SK-N-SH (cell line): ENCODE measurements at regions of chr6 and their contacts with region 1.

Region 1: GRCh38 chr6:106444777-106445507 is 84.4 kb downstream of the CRYBG1 start:
- DNase-seq: peak; percentile 67
- H3K4me3 ChIP-seq: no peak overlapping the region
- H3K27ac ChIP-seq: no peak overlapping the region
- H3K4me1 ChIP-seq: no peaks in the 10 kb centered on the region
- H3K27me3 ChIP-seq: peaks cover 20% of the 10 kb centered on the region
- CTCF ChIP-seq: peak; percentile 82
- EP300 ChIP-seq: no peak
- RAD21 ChIP-seq: peak; percentile 81

Region 2: DNA sequence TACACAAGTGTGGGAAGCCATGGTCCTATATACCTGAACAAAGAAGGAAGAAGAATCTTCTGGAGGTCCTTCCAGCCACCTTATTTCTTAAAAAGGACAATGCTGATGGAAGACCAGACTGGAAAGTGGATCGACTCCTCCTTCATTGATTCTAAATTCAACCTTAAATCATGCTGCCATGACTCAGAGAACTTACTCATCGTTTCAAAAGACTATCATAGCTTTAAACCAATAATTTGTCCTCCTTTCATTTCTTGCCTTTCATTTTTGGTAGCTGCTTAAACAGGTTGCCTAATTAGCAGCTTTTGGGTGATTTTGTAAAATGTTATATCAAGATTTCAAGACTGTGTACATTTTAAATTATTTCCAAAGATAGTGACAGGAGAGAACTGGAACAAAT is 123.6 kb after region 1 on chr6:
- CTCF ChIA-PET with region 1: interaction called, 64 read pairs
- POLR2A ChIA-PET with region 1: no interaction called
- DNase-seq: no peak
- H3K4me3 ChIP-seq: no peak overlapping the region
- H3K27ac ChIP-seq: no peak overlapping the region
- H3K4me1 ChIP-seq: peaks cover 0 to 9% of the 10 kb centered on the region in 2 experiments; a peak in 2 of 4 replicates
- H3K27me3 ChIP-seq: no peaks in the 10 kb centered on the region
- CTCF ChIP-seq: no peak
- EP300 ChIP-seq: no peak
- RAD21 ChIP-seq: no peak